ENCODE measurements at regions of chr9 and their contacts with region 1.

Region 1: GRCh38 chr9:35790385-35791296 is 750 bp upstream of the NPR2 start:
- DNase-seq: peak in 1 of 2 donors; percentile 88
- H3K4me3 ChIP-seq: peak overlapping the region; percentile 64 to 87
- H3K27ac ChIP-seq: peak overlapping the region; percentile 81 to 87
- H3K4me1 ChIP-seq: peaks cover 5 to 28% of the 10 kb centered on the region in 2 donors
- H3K27me3 ChIP-seq: no peaks in the 10 kb centered on the region
- CTCF ChIP-seq: peak; percentile 76 to 90 (median 83)

Region 2: DNA sequence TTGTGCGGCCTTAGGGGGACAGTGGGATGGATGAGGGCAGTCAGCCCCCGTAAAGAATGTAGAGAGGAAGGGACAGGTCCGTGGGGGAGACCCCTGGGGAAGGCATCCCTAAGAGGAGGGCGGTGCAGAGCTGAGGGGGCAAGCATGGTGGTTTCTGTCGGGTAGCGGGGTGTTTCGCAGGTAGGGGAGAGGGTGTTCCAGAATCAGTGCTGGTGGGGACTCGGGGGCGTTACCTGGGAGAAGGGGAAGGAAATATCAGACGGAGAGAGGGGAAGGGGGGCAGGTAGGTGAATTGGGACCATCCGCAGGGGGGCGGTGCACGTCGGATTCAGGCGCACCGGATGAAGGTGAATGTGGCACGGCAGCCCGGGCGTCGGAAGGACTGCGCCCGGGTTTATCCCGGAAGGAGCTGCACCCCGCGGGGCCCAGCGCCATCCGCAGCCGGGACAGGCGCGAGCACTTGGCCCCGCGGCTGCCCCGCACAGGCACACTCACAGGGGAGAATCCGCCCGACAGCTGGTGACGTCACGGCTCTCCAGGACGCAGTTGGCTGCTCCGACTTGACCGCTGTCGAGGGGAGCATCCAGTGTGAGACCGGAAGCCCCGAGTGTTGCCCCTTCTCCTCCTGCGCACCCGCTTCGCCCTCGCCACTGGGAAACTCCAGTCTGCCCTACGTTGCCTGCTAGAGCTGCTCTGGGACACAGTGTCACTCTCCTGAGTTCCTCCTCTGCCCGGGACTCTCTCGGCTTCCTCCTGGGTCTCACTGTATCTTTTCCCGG is 173.8 kb before region 1 on chr9:
- intact Hi-C with region 1: no loop called
- DNase-seq: peak; percentile 55 to 87
- H3K4me3 ChIP-seq: peak overlapping the region; percentile 43 to 65
- H3K27ac ChIP-seq: no peak overlapping the region
- H3K4me1 ChIP-seq: no peaks in the 10 kb centered on the region
- H3K27me3 ChIP-seq: no peaks in the 10 kb centered on the region
- CTCF ChIP-seq: no peak

Region 3: GRCh38 chr9:35882263-35882848 is 91.7 kb after region 1 on chr9:
- intact Hi-C with region 1: loop called (anchors 1 kb)
- DNase-seq: peak in 1 of 2 donors; percentile 90
- H3K4me3 ChIP-seq: no peak overlapping the region
- H3K27ac ChIP-seq: no peak overlapping the region
- H3K4me1 ChIP-seq: no peaks in the 10 kb centered on the region
- H3K27me3 ChIP-seq: no peaks in the 10 kb centered on the region
- CTCF ChIP-seq: peak; percentile 90 to 96 (median 91)

Region 4: DNA sequence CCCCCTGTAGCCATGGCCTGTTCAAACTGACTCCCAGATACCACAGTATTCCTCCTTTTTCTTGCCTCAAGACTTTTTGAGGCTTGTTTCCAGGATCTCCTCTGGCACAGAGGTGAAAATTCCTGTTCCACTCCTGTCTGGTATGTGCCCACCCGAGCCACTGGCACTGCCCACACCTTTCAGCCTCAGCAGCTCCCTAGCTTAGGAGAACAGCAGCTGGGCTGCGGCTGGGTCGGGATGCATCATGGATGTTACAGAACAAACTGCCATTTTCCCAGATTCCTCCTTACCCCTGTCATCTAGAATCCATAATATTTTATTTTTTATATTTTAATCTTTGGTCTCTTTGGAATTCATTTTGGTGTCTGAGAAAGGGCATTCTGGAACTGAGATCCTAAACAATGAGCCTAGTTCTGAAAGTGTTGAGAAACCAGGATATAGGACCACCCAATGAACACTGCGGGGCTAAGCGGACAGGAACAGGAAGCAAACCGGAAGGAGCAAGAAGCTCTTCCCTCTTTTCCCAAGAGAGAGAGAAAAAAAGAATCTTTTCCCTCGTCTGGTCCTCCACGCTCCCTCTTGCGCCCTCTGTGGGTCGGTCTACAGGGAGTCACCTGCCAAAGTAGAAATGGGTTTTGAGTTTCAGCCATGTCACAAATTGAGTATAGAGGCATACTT is 154.8 kb after region 1 on chr9:
- intact Hi-C with region 1: loop called (anchors 5 kb)
- DNase-seq: peak in 1 of 2 donors; percentile 87
- H3K4me3 ChIP-seq: peak overlapping the region in 1 of 2 donors; percentile 9
- H3K27ac ChIP-seq: peak overlapping the region; percentile 53 to 72
- H3K4me1 ChIP-seq: peaks cover 5 to 21% of the 10 kb centered on the region in 2 donors
- H3K27me3 ChIP-seq: no peaks in the 10 kb centered on the region
- CTCF ChIP-seq: peak; percentile 69 to 87 (median 85)

Measured in ascending aorta (tissue), 2 donors.